Ovary (tissue), 10 donors: ENCODE measurements at regions of chr4 and their contacts with region 1.

Region 1: GRCh38 chr4:43411226-43411625 is 518.7 kb downstream of the GRXCR1 start:
- DNase-seq: no peak
- H3K4me3 ChIP-seq: no peak overlapping the region
- H3K27ac ChIP-seq: no peak overlapping the region
- H3K4me1 ChIP-seq: no peaks in the 10 kb centered on the region
- H3K27me3 ChIP-seq: no peaks in the 10 kb centered on the region
- CTCF ChIP-seq: no peak
- EP300 ChIP-seq: no peak
- POLR2A ChIP-seq: no peak

Region 2: GRCh38 chr4:43189112-43189511 is 222.1 kb before region 1 on chr4:
- intact Hi-C with region 1: loop called in 1 of 4 experiments (anchors 2 kb)
- DNase-seq: no peak
- H3K4me3 ChIP-seq: no peak overlapping the region
- H3K27ac ChIP-seq: no peak overlapping the region
- H3K4me1 ChIP-seq: no peaks in the 10 kb centered on the region
- H3K27me3 ChIP-seq: no peaks in the 10 kb centered on the region
- CTCF ChIP-seq: no peak
- EP300 ChIP-seq: no peak
- POLR2A ChIP-seq: no peak

Region 3: DNA sequence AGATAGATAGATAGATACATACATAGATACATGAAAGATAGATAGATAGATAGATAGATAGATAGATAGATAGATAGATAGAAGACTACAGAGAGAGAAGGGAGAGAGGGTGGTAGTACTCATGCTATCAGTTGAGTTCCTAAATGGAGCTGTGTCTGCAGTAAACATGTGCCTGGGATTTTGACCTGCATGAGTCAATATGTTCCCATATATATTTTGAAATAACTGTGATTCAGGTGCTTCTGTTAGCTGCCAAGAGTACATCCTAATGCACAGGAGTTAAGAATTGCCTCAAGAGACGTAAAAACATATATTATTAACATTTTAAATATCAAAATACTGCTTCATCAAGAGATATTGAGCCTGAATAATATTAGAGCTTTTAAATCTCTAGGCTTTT is 139.3 kb before region 1 on chr4:
- intact Hi-C with region 1: no loop called
- DNase-seq: no peak
- H3K4me3 ChIP-seq: no peak overlapping the region
- H3K27ac ChIP-seq: no peak overlapping the region
- H3K4me1 ChIP-seq: no peaks in the 10 kb centered on the region
- H3K27me3 ChIP-seq: no peaks in the 10 kb centered on the region
- CTCF ChIP-seq: no peak
- EP300 ChIP-seq: no peak
- POLR2A ChIP-seq: no peak

Region 4: DNA sequence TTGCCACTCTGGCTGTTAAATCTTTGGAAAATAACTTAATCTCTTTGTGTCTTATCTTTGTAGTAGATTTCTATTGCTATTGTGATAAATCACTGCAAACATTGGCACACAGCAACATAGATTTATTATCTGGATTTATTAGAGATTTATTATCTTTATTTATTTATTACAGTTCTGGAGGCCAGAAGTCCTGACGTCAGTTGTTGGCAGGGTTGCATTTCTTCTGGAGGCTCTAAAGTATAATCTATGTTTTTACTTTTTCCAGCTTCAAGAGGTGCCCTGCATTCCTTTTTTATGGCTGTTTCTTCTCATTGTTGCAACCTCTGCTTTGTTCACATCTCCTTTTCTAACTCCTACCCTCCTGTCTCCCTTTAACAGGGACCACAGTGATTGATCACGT is 24.1 kb after region 1 on chr4:
- intact Hi-C with region 1: loop called in 1 of 4 experiments (anchors 1 kb)
- DNase-seq: no peak
- H3K4me3 ChIP-seq: no peak overlapping the region
- H3K27ac ChIP-seq: no peak overlapping the region
- H3K4me1 ChIP-seq: no peaks in the 10 kb centered on the region
- H3K27me3 ChIP-seq: no peaks in the 10 kb centered on the region
- CTCF ChIP-seq: no peak
- EP300 ChIP-seq: no peak
- POLR2A ChIP-seq: no peak

Region 5: DNA sequence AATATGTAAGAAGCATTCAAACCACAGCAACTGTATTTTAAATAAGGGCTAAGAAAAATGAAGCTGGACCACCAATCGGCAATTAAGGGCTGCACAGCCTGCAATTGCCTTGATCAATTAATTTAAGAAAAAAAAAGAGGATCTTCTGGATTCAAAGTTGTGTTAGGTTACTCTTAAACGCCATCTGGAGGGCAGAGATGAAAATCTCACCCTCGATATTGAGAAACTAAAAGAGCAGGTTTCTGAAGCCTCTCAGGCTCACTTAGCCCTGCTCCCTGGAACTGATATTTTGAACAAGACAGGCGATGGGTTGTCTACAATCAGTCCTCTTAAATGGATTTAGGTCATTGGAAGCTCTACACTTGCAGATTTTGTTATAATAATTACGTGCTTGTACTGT is 60.7 kb after region 1 on chr4:
- intact Hi-C with region 1: no loop called
- DNase-seq: no peak
- H3K4me3 ChIP-seq: no peak overlapping the region
- H3K27ac ChIP-seq: no peak overlapping the region
- H3K4me1 ChIP-seq: no peaks in the 10 kb centered on the region
- H3K27me3 ChIP-seq: no peaks in the 10 kb centered on the region
- CTCF ChIP-seq: no peak
- EP300 ChIP-seq: no peak
- POLR2A ChIP-seq: no peak

Region 6: GRCh38 chr4:45317276-45317675 is 1906.0 kb after region 1 on chr4:
- intact Hi-C with region 1: loop called in 1 of 4 experiments (anchors 5 kb)
- DNase-seq: no peak
- H3K4me3 ChIP-seq: no peak overlapping the region
- H3K27ac ChIP-seq: no peak overlapping the region
- H3K4me1 ChIP-seq: no peaks in the 10 kb centered on the region
- H3K27me3 ChIP-seq: no peaks in the 10 kb centered on the region
- CTCF ChIP-seq: no peak
- EP300 ChIP-seq: no peak
- POLR2A ChIP-seq: no peak